Calu3 (cell line): ENCODE measurements at regions of chr10 and their contacts with region 1.

Region 1: DNA sequence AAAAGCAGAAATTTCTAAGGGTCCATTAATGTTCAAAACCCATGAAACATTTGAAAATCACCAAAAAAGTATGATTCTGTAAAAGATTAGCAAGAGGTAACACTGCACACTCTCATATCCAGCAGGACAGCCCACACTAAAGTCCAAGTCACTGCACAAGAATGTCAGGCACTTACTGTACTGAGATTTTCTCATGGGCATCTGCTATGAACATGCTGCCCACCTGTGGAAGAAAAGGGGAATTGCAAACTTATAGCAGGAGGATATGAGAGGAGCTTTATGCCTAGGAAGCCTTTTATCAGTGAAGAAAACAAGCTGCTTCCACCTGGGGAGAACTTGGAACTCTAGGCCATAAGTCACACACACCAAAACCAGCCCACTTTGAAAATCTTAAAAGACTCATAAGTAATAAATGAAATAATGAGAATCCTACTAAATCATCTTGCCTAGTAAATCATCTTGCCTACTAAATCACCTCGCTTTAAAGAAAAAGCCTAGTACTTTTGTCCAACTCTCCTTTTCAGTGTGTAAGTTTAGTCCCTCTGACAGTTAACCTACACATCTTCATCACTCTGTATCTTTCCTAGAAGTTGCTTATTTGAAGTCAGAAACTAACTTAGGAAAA is 46.1 kb downstream of the ARMH3 start:
- DNase-seq: peak; percentile 45
- H3K4me3 Mint-ChIP-seq: no peak overlapping the region
- H3K27ac Mint-ChIP-seq: peak overlapping the region; percentile 23
- H3K4me1 Mint-ChIP-seq: peaks cover 18% of the 10 kb centered on the region
- H3K27me3 Mint-ChIP-seq: no peaks in the 10 kb centered on the region
- CTCF ChIP-seq: peak; percentile 50

Region 2: GRCh38 chr10:101012525-101013364 is 997.2 kb before region 1 on chr10:
- CTCF ChIA-PET with region 1: no interaction called
- intact Hi-C with region 1: no loop called
- DNase-seq: peak; percentile 84
- H3K4me3 Mint-ChIP-seq: no peak overlapping the region
- H3K27ac Mint-ChIP-seq: peak overlapping the region; percentile 66
- H3K4me1 Mint-ChIP-seq: peaks cover 10% of the 10 kb centered on the region
- H3K27me3 Mint-ChIP-seq: peaks cover 34% of the 10 kb centered on the region
- CTCF ChIP-seq: peak; percentile 61

Region 3: DNA sequence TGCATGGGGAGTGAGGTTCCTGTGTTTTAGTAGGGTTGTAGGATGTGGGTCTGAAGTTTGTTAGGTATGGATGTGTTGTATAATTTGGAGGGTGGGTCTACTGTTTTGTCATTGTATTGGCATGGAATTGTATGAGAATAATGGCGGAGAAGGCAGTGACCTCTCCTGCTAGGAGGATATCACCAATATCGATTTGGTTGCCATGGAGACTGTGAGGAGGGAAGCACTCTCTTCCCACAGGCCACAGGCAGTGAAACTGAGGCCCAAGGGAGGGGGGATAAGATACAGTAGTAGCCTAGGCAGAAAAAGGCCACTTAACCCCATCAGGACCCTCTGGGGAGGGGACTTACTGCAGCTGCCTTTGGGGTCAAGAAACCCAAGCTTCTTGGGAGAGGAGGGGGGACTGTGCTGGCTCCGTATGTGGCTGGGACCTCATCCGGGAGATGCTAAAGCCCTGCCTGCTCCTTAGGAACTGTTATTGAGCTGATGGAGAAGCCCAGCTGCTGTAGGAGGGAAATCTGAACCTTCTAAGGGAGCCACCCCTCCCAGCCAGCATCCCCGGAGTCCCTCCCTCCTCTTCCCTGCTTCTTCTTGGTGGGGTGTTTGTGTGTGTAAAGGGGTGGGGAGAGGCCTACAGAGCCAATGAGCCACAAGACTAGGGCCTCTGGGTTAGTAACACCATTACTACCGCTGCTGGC is 174.7 kb before region 1 on chr10:
- CTCF ChIA-PET with region 1: interaction called, 47 read pairs
- intact Hi-C with region 1: loop called (anchors 1 kb)
- DNase-seq: no peak
- H3K4me3 Mint-ChIP-seq: no peak overlapping the region
- H3K27ac Mint-ChIP-seq: peak overlapping the region; percentile 5
- H3K4me1 Mint-ChIP-seq: peaks cover 27% of the 10 kb centered on the region
- H3K27me3 Mint-ChIP-seq: no peaks in the 10 kb centered on the region
- CTCF ChIP-seq: no peak

Region 4: GRCh38 chr10:101889256-101890210 is 120.4 kb before region 1 on chr10:
- CTCF ChIA-PET with region 1: interaction called, 31 read pairs
- intact Hi-C with region 1: loop called (anchors 1 kb)
- DNase-seq: peak; percentile 78
- H3K4me3 Mint-ChIP-seq: no peak overlapping the region
- H3K27ac Mint-ChIP-seq: no peak overlapping the region
- H3K4me1 Mint-ChIP-seq: peaks cover 9% of the 10 kb centered on the region
- H3K27me3 Mint-ChIP-seq: no peaks in the 10 kb centered on the region
- CTCF ChIP-seq: peak; percentile 72